ENCODE measurements at regions of chr19 and their contacts with region 1.

Region 1: DNA sequence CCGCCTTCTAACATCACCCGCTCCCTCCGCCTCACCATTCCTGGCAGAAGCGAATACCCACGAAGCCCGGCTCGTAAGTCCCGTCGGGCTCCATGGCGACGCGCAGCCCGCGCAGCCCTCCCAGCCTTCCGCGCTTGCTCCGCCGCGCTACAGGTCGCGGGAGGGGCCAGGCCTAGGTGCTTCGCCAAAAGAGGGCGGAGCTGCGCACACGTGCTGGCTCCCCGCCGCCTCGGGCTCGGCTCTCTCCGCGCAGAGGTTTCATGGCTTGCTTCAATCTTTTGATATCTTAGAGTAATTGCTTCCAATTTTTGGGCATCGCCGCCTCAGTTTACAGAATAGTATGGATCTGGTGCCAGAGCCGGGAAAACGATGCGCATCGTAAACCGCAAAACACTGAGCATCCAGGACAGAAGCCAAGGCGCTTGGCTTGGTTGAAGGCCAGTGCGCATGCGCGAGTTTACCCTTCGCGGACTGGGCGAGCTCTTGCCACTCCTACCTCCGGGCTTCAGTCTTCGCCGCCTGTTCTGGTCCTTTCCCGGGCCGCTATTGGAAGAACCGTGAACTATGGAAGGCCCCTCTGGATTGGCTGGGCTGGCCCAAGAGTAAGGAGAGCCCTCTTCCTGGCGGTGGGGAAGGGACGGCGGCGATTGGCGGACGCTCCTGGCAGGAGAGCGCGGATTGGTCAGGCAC is at the start of gene POLR2I:
- DNase-seq: peak; percentile 99
- H3K4me3 Mint-ChIP-seq: peak within 1 kb of the TSS; percentile 94
- H3K27ac Mint-ChIP-seq: peak within 1 kb of the TSS; percentile 95
- H3K4me1 Mint-ChIP-seq: peaks cover 29% of the 10 kb centered on the region
- H3K27me3 Mint-ChIP-seq: peaks cover 4% of the 10 kb centered on the region
- total RNA-seq, gene POLR2I: 83.4 and 86.3 TPM in 2 replicates

Region 2: GRCh38 chr19:36014029-36014924 is 100.6 kb before region 1 on chr19 and contains the start of gene ALKBH6:
- intact Hi-C with region 1: loop called (anchors 1 kb)
- DNase-seq: peak; percentile 100
- H3K4me3 Mint-ChIP-seq: peak within 1 kb of the TSS; percentile 97
- H3K27ac Mint-ChIP-seq: peak within 1 kb of the TSS; percentile 95
- H3K4me1 Mint-ChIP-seq: peaks cover 37% of the 10 kb centered on the region
- H3K27me3 Mint-ChIP-seq: no peaks in the 10 kb centered on the region
- total RNA-seq, gene ALKBH6: 46.1 and 50.7 TPM in 2 replicates

Region 3: GRCh38 chr19:36032251-36033104 is 82.4 kb before region 1 on chr19 and contains the start of gene CLIP3:
- intact Hi-C with region 1: no loop called
- DNase-seq: peak; percentile 83
- H3K4me3 Mint-ChIP-seq: peak within 1 kb of the TSS; percentile 68
- H3K27ac Mint-ChIP-seq: peak within 1 kb of the TSS; percentile 14
- H3K4me1 Mint-ChIP-seq: peaks cover 26% of the 10 kb centered on the region
- H3K27me3 Mint-ChIP-seq: no peaks in the 10 kb centered on the region
- total RNA-seq, gene CLIP3: 0.96 and 1.6 TPM in 2 replicates

Region 4: DNA sequence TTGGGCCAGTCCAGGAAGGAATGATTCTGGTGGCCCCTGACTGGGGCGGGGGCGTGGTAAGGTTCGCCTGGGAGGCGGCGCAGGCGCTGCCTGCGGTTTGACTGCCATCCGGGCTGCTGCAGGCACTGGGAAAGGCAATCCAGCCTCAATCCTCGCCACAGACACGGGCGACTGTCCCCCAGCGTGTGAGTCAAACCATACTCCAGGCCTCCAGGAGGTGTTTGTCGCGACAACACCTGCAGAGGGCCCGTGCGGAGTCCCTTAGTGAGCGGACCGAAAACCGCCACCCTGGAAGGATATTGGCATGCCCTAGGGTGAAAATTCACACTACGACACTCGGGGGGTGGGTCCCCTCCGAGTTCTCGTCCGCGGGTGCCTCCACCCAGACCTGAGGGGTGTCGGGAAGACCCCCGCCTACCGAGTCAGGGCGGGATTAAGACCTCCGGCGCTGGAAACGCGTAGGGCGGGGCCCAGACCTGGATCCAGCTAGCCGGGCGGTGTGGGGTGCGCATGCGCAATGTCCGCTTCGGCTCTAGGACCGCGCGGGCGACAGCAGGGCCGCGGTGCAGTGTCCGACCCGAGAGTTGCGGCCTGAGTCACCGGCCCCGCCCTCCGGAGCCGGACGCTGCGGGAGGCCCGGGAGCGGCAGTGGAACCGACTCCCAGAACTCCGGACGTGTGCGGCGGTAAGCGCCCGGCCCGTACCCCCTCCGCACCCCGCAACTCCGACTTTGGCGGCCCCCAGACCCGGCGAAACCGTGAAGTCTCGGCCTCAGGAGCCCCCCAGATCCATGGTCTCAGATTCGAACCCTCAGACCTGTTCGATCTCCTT is 24.8 kb after region 1 on chr19 and contains the start of gene CAPNS1:
- intact Hi-C with region 1: loop called (anchors 1 kb)
- DNase-seq: peak; percentile 98
- H3K4me3 Mint-ChIP-seq: peak within 1 kb of the TSS; percentile 89
- H3K27ac Mint-ChIP-seq: peak within 1 kb of the TSS; percentile 95
- H3K4me1 Mint-ChIP-seq: peaks cover 23% of the 10 kb centered on the region
- H3K27me3 Mint-ChIP-seq: no peaks in the 10 kb centered on the region
- total RNA-seq, gene CAPNS1: 351 and 362 TPM in 2 replicates

Region 5: GRCh38 chr19:36207605-36208252 is 92.8 kb after region 1 on chr19:
- intact Hi-C with region 1: no loop called
- DNase-seq: no peak
- H3K4me3 Mint-ChIP-seq: no peak overlapping the region
- H3K27ac Mint-ChIP-seq: no peak overlapping the region
- H3K4me1 Mint-ChIP-seq: no peaks in the 10 kb centered on the region
- H3K27me3 Mint-ChIP-seq: no peaks in the 10 kb centered on the region

Measured in activated CD4-positive, alpha-beta T cell treated with anti-CD3 and anti-CD28 coated beads, Interleukin-2, amount 10 ng/mL, durations not matched to agents 24 days and 14 days (primary cell).